Mucosa of descending colon (tissue), 3 donors: ENCODE measurements at regions of chr15 and their contacts with region 1.

Region 1: GRCh38 chr15:66946578-66947164 is 118.7 kb upstream of the SMAD3 start:
- DNase-seq: peak in 2 of 3 donors; percentile 74 to 76
- ATAC-seq: peak; percentile 81
- H3K4me3 ChIP-seq: no peak overlapping the region
- H3K4me1 ChIP-seq: peaks cover 5% of the 10 kb centered on the region
- CTCF ChIP-seq: peak; percentile 77

Region 2: GRCh38 chr15:66802087-66803001 is 144.3 kb before region 1 on chr15:
- intact Hi-C with region 1: no loop called
- DNase-seq: no peak
- ATAC-seq: no peak
- H3K4me3 ChIP-seq: no peak overlapping the region
- H3K4me1 ChIP-seq: peaks cover 16% of the 10 kb centered on the region
- CTCF ChIP-seq: no peak

Region 3: GRCh38 chr15:67024314-67024997 is 77.8 kb after region 1 on chr15:
- intact Hi-C with region 1: no loop called
- DNase-seq: peak; percentile 50 to 76 (median 62)
- ATAC-seq: peak; percentile 91
- H3K4me3 ChIP-seq: no peak overlapping the region
- H3K4me1 ChIP-seq: peaks cover 16% of the 10 kb centered on the region
- CTCF ChIP-seq: no peak

Region 4: DNA sequence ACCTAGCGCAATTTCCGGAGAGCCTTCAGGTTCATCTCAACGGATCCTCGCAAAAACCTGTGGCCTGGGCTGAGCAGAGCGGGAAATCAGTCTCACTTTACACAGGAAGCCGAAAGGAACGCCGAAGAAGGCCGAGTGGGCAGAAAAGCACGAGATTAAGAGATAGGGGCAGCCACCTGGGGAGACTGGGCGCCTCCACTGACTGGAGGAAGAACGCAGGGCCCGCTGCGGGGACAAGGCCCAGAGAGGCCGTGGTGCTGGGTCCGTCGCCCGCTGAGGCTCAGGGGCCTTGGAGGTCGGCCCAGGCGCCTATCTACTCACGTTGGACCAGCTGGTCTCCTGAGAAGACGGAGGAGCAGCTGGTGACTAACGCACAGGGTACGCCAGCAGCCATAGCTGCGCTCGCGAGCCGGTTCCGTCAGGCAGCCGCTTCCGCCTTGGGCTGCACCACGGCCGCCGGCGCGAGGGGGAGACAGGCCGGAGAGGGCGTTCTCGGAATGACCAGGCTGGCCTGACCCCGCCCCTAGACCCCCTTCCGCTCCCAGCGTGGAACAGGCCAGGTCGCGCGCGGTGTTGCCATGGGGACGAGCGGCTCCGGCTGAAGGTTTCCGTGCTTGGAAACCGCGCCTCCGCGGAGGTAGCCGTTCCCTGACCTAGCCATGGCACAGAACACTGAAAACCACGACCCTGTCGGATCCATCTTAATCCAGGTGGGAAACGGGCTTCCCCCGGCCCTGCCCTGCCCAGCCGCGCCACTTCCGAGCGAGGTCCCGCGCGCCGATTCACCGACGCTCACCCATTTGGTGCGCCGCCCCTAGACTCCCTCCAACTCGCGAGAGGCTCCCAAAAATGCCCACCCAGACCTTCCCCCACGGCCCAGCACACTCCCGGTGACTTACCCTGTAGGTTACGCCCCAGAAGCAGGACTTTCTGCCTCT is 307.8 kb after region 1 on chr15 and contains the starts of genes AAGAB and IQCH:
- intact Hi-C with region 1: no loop called
- DNase-seq: peak; percentile 98 to 100 (median 99)
- ATAC-seq: peak; percentile 99
- H3K4me3 ChIP-seq: peak within 1 kb of the TSS; percentile 93
- H3K4me1 ChIP-seq: peaks cover 13% of the 10 kb centered on the region
- CTCF ChIP-seq: no peak
- total RNA-seq, gene AAGAB: 40.5 to 52.1 (median 48.3) TPM
- total RNA-seq, gene IQCH: 2.2 to 3.0 (median 2.2) TPM

Region 5: DNA sequence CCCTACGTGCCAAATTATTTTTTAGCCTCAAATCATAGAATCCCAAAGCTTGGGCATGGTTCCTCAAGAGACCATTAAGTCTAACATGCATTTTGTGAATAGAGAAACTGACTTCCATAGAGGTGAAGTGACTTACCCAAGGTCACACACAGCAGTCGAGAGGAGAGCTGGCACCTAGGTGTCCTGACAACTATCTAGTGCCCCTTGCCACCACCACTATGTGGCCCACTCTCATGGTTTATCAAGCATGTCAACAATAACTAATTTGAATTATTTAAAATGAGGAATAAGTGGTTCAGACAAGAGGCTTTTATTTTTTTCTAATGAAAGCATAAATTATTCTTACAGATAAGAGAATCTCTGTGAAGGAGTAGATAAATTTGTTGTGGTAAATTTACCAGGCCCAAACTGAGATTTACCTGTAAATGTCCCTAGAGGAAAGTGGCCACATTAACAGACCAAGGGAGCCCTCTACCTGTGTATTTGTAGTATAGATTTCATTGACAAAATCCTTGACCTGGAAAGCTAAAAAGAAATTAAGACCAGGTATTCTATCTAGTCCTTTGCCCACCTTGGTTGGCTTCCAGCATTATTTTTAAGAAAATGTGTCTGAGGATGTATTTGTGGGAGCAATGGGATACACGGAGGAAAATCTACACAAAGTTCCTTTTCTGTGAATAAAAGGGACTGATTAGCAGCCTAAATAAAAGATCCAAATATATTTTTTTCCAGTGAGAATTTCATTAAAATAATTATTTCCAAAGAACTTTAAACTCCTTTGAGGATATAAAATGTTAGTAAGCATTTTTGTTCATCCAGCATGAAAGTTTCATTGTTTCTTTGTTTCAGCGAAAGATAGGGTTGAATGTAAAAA is 357.1 kb after region 1 on chr15:
- intact Hi-C with region 1: loop called (anchors 2 to 10 kb)
- DNase-seq: peak in 1 of 3 donors; percentile 40
- ATAC-seq: peak; percentile 48
- H3K4me3 ChIP-seq: no peak overlapping the region
- H3K4me1 ChIP-seq: no peaks in the 10 kb centered on the region
- CTCF ChIP-seq: no peak

Region 6: DNA sequence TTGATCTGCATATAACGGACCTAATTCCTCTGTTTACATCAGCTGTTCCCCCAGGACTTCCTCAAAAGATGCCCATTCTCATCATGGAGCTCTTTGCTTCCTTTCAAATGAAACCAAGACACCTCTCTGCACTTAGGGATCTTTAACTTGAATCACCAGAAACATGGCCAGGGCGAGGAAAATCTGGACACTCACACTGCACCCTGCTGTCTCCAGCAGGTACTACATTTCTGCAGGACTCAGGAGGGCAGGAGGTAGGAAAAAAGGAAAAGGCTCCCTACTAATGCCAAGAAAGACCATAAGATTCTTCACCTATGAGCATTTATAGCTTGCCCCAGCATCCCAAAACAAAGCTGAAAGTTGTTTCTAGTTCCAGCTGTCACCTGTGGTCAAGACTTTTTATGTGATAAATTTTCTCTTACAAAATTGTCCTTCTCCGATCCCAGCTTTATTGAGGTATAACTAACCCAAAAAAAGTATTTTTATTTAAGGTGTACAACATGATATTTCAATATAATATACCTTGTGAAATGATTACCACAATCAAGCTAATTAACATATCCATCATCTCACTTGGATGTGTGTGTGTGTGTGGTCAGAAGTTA is 486.9 kb after region 1 on chr15:
- intact Hi-C with region 1: loop called in 1 of 2 experiments (anchors 10 kb)
- DNase-seq: peak in 2 of 3 donors; percentile 51 to 61
- ATAC-seq: peak; percentile 82
- H3K4me3 ChIP-seq: no peak overlapping the region
- H3K4me1 ChIP-seq: no peaks in the 10 kb centered on the region
- CTCF ChIP-seq: peak; percentile 53